Esophagus squamous epithelium (tissue), 5 donors: ENCODE measurements at regions of chr16 and their contacts with region 1.

Region 1: GRCh38 chr16:46830902-46831647 is at the start of gene C16orf87:
- DNase-seq: peak; percentile 79
- H3K4me3 ChIP-seq: peak within 1 kb of the TSS; percentile 67 to 96 (median 86)
- H3K27ac ChIP-seq: peak within 1 kb of the TSS; percentile 87 to 94 (median 92)
- H3K4me1 ChIP-seq: peaks cover 3 to 26% (median 4%) of the 10 kb centered on the region in 3 donors
- H3K27me3 ChIP-seq: no peaks in the 10 kb centered on the region
- CTCF ChIP-seq: no peak
- POLR2A ChIP-seq: peak in 3 of 4 donors; percentile 18 to 77 (median 44)
- total RNA-seq, gene C16orf87: 5.7 to 7.6 (median 7.0) TPM

Region 2: GRCh38 chr16:46689365-46690280 is 141.5 kb before region 1 on chr16 and contains the start of gene ORC6:
- intact Hi-C with region 1: loop called (anchors 5 kb)
- DNase-seq: peak; percentile 94
- H3K4me3 ChIP-seq: peak within 1 kb of the TSS; percentile 83 to 94 (median 88)
- H3K27ac ChIP-seq: peak within 1 kb of the TSS; percentile 93 to 98 (median 96)
- H3K4me1 ChIP-seq: peaks cover 7 to 52% (median 23%) of the 10 kb centered on the region in 3 donors
- H3K27me3 ChIP-seq: no peaks in the 10 kb centered on the region
- CTCF ChIP-seq: peak in 2 of 6 experiments; percentile 12 to 50
- POLR2A ChIP-seq: peak in 1 of 4 donors; percentile 19
- total RNA-seq, gene ORC6: 3.4 to 12.6 (median 7.7) TPM

Region 3: GRCh38 chr16:46731691-46732555 is 99.2 kb before region 1 on chr16:
- intact Hi-C with region 1: no loop called
- DNase-seq: no peak
- H3K4me3 ChIP-seq: no peak overlapping the region
- H3K27ac ChIP-seq: no peak overlapping the region
- H3K4me1 ChIP-seq: no peaks in the 10 kb centered on the region
- H3K27me3 ChIP-seq: no peaks in the 10 kb centered on the region
- CTCF ChIP-seq: no peak
- POLR2A ChIP-seq: no peak

Region 4: DNA sequence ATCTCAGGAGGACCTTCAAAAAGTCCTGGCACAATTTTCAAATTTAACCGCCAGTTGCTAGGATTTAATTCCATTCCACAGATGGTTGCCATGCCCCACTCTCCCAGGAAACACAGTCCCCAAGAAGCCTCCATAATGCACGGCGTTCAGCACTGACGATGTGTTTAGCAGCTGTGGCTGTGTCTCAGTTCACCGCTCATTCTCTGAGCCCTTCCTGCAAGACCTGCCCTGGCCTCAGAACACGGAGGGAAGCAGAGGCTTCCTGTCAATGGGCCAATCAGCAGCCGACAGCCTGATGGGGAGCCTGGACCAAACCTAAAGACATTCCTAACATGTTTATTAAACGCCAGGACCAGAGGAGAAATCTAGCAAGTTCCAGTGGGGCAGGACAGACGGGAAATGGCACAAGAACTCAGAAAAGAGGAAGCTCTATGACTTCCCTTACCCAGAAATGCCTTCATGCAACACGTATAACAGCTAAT is 87.8 kb before region 1 on chr16:
- intact Hi-C with region 1: no loop called
- DNase-seq: no peak
- H3K4me3 ChIP-seq: no peak overlapping the region
- H3K27ac ChIP-seq: peak overlapping the region in 2 of 4 donors; percentile 22 to 52
- H3K4me1 ChIP-seq: peaks cover 0 to 3% (median 0%) of the 10 kb centered on the region in 3 donors
- H3K27me3 ChIP-seq: peaks cover 0 to 13% (median 0%) of the 10 kb centered on the region in 4 donors
- CTCF ChIP-seq: no peak
- POLR2A ChIP-seq: no peak